HepG2 (cell line): ENCODE measurements at regions of chr9 and their contacts with region 1.

Region 1: GRCh38 chr9:71279151-71279739 is 157.8 kb upstream of the TRPM3 start:
- DNase-seq: peak; percentile 68
- ATAC-seq: peak; percentile 98
- H3K4me3 ChIP-seq: peak overlapping the region in 2 of 3 experiments; percentile 16 to 24; a peak in 3 of 6 replicates
- H3K27ac ChIP-seq: peak overlapping the region; percentile 67
- H3K4me1 ChIP-seq: peaks cover 40% of the 10 kb centered on the region
- H3K27me3 ChIP-seq: no peaks in the 10 kb centered on the region
- CTCF ChIP-seq: no peak
- EP300 ChIP-seq: peak in 1 of 2 experiments; percentile 74; a peak in 2 of 4 replicates
- POLR2A ChIP-seq: no peak
- RAD21 ChIP-seq: no peak

Region 2: DNA sequence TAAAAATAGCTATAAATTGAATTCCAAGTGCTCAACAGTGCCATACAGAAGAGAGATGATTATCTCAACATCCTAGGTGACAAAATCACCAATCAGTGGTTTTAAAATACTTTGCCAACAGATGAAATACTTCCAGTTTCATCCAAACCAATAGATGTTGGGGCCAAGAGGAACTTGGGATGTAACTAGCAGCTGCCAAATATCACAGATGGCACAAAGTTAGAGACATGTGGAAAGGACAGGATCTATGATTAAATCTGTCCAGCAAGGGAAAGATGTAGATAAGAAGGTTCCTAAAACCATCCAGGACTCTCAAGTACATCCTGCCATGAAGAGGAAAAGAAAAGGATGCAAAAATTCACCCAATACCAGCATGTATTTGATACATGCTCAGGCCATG is 181.6 kb before region 1 on chr9:
- CTCF ChIA-PET with region 1: no interaction called
- POLR2A ChIA-PET with region 1: no interaction called
- in situ Hi-C with region 1: no loop called
- intact Hi-C with region 1: loop called (anchors 1 kb)
- DNase-seq: no peak
- ATAC-seq: no peak
- H3K4me3 ChIP-seq: no peak overlapping the region
- H3K27ac ChIP-seq: peak overlapping the region; percentile 74
- H3K4me1 ChIP-seq: peaks cover 42% of the 10 kb centered on the region
- H3K27me3 ChIP-seq: no peaks in the 10 kb centered on the region
- CTCF ChIP-seq: no peak
- EP300 ChIP-seq: no peak
- POLR2A ChIP-seq: no peak
- RAD21 ChIP-seq: no peak